ENCODE measurements at regions of chr2 and their contacts with region 1.

Region 1: DNA sequence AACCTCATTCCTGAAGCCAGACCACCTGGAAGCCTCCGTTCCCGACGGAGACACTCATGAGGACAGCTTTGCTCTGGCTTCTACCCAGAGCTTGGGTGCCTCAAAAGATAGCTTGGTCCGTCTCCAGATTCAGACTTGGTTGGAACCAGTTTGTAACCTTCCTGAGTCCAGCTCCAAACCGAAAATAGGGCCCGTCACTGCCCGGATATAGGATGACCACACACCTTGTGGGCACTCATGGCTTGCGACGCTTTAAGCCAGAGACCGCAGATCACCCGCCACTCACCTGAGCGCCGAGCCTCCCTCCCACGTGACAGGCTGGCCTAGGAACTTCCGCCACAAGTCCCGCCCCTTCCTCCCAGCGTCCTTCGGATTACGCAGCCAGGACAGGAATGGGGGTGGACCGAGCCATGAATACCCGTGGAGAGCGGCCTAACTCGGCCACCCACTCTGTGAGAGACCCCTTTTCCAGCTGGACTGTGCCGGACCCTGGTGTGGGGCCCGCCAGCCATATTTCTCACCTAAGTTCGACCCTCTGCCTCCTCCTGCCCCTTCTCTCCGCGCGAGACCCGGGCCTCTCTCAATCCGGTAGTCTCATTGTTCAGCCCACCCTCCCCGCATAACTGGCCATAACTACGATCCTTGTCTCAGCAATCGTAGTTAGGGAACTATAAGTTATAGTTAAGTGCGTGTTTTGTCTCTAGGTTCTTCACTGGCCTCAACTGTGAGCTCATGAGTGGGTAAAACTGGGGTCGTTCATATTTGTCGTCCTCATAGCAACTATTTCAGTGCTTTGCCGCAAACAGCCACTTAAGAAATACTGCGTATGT is at the start of gene MPV17:
- DNase-seq: peak; percentile 84
- H3K4me3 Mint-ChIP-seq: peak within 1 kb of the TSS; percentile 99
- H3K27ac Mint-ChIP-seq: peak within 1 kb of the TSS; percentile 88
- H3K4me1 Mint-ChIP-seq: peaks cover 32% of the 10 kb centered on the region
- H3K27me3 Mint-ChIP-seq: no peaks in the 10 kb centered on the region
- total RNA-seq, gene MPV17: 85.9 and 89.9 TPM in 2 replicates

Region 2: DNA sequence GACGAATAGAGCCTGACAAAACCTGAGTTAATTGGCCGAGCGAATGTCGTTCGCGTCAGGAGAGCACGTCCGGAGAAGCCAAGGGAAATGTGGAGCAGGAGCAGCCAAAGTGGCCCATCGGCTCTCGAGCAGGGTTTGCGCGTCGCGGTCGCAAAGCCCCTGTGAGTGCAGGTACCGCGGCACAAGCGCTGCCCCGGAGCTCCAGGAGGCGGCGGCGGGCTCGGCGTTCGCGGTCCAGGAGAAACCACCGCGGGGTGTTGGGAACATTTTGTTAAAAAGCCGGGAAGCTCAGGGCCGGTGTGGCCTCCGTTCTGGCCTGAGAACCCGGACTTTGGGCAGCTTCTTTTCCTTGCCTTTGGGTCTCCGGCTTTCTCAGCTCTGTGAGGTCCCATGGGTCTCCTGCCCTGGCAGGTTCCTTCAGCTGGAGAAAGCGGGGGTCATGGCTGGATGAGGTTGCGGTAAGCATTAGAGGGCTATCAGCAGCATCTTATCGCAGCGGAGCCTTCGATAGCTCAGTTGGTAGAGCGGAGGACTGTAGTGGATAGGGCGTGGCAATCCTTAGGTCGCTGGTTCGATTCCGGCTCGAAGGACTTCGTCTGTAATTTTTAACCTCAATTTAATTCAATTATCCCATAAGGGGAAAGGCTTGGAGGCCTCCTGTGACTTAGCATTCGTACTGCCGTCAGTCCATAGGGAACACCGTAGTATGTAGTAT is 272.5 kb before region 1 on chr2:
- intact Hi-C with region 1: loop called (anchors 1 kb)
- DNase-seq: peak; percentile 88
- H3K4me3 Mint-ChIP-seq: peak overlapping the region; percentile 96
- H3K27ac Mint-ChIP-seq: peak overlapping the region; percentile 99
- H3K4me1 Mint-ChIP-seq: peaks cover 36% of the 10 kb centered on the region
- H3K27me3 Mint-ChIP-seq: peaks cover 7% of the 10 kb centered on the region

Region 3: GRCh38 chr2:27133905-27134780 is 188.8 kb before region 1 on chr2 and contains the start of gene PREB:
- intact Hi-C with region 1: loop called (anchors 1 kb)
- DNase-seq: peak; percentile 99
- H3K4me3 Mint-ChIP-seq: peak within 1 kb of the TSS; percentile 95
- H3K27ac Mint-ChIP-seq: peak within 1 kb of the TSS; percentile 98
- H3K4me1 Mint-ChIP-seq: peaks cover 12% of the 10 kb centered on the region
- H3K27me3 Mint-ChIP-seq: no peaks in the 10 kb centered on the region
- total RNA-seq, gene PREB: 95.9 and 97.1 TPM in 2 replicates

Region 4: GRCh38 chr2:27264753-27265535 is 58.0 kb before region 1 on chr2:
- intact Hi-C with region 1: loop called (anchors 2 kb)
- DNase-seq: peak; percentile 32
- H3K4me3 Mint-ChIP-seq: peak overlapping the region; percentile 43
- H3K27ac Mint-ChIP-seq: peak overlapping the region; percentile 7
- H3K4me1 Mint-ChIP-seq: peaks cover 14% of the 10 kb centered on the region
- H3K27me3 Mint-ChIP-seq: peaks cover 44% of the 10 kb centered on the region

Region 5: DNA sequence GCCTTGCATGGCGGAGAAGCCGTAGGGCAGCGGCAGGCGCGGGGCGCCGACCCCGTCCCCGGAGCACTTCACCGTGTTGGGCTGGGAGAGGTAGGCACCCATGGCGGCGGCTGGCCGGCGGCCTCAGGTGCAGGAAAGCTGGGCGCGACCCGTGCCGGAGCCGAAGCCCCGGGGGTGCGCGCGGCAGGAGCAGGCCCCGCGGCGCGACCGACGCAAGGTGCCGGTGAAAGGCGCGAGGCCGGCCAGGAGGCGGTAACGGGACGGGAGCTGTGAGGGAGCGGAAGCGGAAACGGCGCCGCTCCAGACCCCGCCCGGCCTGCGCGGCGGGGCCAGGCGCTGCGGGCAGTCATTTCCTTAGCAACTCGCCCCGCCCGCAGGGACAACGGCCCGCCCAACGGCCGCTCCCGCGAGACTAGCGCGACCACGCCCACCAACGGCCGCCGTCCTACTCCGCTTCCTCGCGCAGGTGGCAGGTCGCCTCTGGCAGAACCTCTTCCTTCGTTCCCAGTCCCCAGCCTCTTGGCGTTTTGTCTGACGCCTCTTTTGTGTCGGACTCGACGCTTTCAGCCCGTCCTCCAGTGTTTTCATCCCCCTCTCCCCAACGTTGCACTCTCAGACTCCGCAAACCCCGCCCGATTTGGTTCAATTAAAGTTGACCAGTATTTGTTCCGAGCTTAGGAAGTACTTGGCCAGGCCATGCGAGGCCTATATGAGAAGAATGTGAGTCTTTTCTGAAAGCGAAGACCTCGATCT is 86.5 kb after region 1 on chr2 and contains the start of gene PPM1G:
- intact Hi-C with region 1: loop called (anchors 1 kb)
- DNase-seq: peak; percentile 95
- H3K4me3 Mint-ChIP-seq: peak within 1 kb of the TSS; percentile 90
- H3K27ac Mint-ChIP-seq: peak within 1 kb of the TSS; percentile 89
- H3K4me1 Mint-ChIP-seq: peaks cover 29% of the 10 kb centered on the region
- H3K27me3 Mint-ChIP-seq: peaks cover 2% of the 10 kb centered on the region
- total RNA-seq, gene PPM1G: 158 and 160 TPM in 2 replicates

Measured in activated T-helper 1 cell treated with anti-CD3 and anti-CD28 coated beads, Interleukin-12 subunit alpha, Interleukin-12 subunit beta, Interleukin-2, Interleukin-4 antibody, amounts not matched to agents 30 ng/mL and 10 ng/mL and 1 ng/mL, durations not matched to agents 14 hours and 24 hours and 36 hours (primary cell).